Activated naive CD4-positive, alpha-beta T cell treated with anti-CD3 and anti-CD28 coated beads, Interleukin-2, amount 10 ng/mL, durations not matched to agents 7 days and 5 days (primary cell): ENCODE measurements at regions of chr1 and their contacts with region 1.

Region 1: DNA sequence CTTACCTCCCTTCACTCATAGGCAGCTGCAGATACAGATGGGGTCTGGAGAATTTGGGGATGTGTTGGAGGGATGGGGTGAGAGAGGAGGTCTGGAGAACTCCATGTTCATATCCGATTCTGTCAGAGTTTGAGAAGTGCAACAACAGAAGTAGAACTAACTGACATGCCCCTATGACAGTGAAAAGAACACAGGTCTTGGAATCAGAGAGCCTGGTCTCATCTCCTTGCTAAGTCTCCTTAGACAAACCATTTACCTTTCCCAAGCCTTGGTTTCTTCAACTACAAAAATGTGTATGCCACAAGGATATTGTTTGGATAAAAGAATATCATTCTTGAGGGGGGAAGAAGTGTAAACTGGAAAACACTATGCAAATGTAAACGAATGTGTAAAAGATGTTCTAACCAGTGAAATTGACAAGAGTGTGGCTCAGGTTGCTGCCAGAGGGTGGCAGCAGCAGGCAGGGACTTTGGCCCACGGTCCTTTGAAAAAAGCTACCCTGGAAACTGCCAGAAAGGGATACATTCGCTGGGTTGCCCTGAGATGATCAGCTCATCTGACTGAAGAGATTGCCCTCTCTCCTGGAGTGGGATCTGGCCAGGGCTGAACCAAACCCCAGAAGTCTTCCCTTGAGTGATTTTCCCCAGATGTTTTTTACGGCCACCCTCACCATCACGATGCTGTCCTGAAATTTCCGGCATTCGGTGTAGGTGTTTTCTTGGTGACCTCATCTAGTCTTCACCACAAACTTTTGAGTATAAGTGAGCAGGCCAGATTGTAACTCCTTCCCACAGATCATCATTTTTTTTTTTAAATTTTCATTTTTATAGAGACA is 17.0 kb upstream of the CD2 start:
- DNase-seq: peak; percentile 83
- H3K4me3 Mint-ChIP-seq: peak overlapping the region; percentile 25
- H3K27ac Mint-ChIP-seq: peak overlapping the region; percentile 96
- H3K4me1 Mint-ChIP-seq: peaks cover 48% of the 10 kb centered on the region
- H3K27me3 Mint-ChIP-seq: no peaks in the 10 kb centered on the region

Region 2: DNA sequence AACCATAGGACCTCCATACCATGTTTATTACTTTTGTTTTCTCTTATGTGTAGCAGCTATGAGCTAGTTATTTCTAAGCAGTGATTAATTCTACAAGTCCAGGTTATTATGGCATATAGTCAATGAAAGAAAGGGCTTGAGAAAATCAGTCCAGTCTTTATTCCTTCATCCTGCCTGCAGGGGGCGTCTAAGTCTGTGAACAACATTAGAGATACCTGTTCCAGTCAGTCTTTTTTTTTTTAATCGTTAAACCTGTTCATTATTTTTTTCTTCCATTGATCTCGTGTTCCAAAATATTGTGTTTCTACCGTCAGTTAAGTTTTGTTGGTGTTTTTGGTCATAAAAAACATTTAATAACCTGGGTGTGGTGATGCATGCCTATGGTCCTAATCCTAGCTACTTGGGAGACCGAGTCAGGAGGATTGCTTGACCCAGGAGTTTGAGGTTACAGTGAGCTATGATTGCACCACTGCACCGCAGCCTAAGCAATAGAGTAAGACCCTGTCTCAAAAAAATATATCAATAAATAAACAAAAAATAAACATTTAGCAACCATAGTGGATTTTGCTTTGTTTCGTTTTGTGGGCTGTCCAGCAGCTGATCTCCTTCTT is 12.4 kb before region 1 on chr1:
- CTCF ChIA-PET with region 1: interaction called, 39 read pairs
- DNase-seq: peak; percentile 86
- H3K4me3 Mint-ChIP-seq: no peak overlapping the region
- H3K27ac Mint-ChIP-seq: no peak overlapping the region
- H3K4me1 Mint-ChIP-seq: peaks cover 19% of the 10 kb centered on the region
- H3K27me3 Mint-ChIP-seq: peaks cover 4% of the 10 kb centered on the region

Region 3: DNA sequence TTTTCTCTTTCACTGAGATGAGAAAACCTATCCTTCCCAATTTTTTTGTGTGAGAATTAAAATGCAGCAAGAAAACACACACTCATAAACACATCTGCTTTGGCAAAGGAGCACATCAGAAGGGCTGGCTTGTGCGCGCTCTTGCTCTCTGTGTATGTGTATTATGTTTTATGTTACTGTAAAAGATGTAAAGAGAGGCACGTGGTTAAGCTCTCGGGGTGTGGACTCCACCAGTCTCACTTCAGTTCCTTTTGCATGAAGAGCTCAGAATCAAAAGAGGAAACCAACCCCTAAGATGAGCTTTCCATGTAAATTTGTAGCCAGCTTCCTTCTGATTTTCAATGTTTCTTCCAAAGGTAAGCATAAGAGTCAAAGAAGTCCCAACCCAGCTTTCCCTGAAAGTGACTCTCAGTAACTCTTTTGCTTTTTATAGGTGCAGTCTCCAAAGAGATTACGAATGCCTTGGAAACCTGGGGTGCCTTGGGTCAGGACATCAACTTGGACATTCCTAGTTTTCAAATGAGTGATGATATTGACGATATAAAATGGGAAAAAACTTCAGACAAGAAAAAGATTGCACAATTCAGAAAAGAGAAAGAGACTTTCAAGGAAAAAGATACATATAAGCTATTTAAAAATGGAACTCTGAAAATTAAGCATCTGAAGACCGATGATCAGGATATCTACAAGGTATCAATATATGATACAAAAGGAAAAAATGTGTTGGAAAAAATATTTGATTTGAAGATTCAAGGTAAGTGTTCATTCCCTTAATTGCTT is 17.2 kb after region 1 on chr1 and contains the start of gene CD2:
- CTCF ChIA-PET with region 1: interaction called, 62 read pairs
- DNase-seq: peak; percentile 74
- H3K4me3 Mint-ChIP-seq: peak within 1 kb of the TSS; percentile 99
- H3K27ac Mint-ChIP-seq: peak within 1 kb of the TSS; percentile 99
- H3K4me1 Mint-ChIP-seq: peaks cover 43% of the 10 kb centered on the region
- H3K27me3 Mint-ChIP-seq: no peaks in the 10 kb centered on the region

Region 4: GRCh38 chr1:116769561-116769977 is 32.3 kb after region 1 on chr1:
- CTCF ChIA-PET with region 1: interaction called, 67 read pairs
- DNase-seq: peak; percentile 85
- H3K4me3 Mint-ChIP-seq: peak overlapping the region; percentile 59
- H3K27ac Mint-ChIP-seq: peak overlapping the region; percentile 99
- H3K4me1 Mint-ChIP-seq: peaks cover 88% of the 10 kb centered on the region
- H3K27me3 Mint-ChIP-seq: no peaks in the 10 kb centered on the region

Region 5: DNA sequence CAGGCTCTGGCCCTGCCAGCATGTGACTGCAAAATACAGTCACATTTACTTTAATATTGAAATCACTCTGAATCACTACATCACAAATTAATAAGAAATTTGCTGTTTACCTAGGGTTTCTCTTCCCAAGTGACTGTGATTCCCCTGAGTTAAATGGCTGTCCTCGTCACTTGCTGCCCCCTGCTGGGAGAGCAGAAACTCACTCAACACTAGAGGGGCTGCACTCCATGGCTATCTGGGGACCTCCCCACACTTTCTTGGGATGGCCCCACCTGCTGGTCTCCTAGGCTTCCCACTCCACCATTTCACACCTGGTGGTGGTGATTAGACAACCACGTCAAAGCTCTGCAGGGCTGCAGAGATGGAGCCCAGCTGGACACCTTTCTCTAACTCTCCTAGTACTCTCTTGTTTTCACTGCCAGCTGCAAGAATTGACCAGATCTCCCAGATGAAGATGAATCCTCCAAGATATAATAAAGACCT is 80.4 kb after region 1 on chr1:
- CTCF ChIA-PET with region 1: interaction called, 80 read pairs
- DNase-seq: peak; percentile 84
- H3K4me3 Mint-ChIP-seq: peak overlapping the region; percentile 25
- H3K27ac Mint-ChIP-seq: peak overlapping the region; percentile 85
- H3K4me1 Mint-ChIP-seq: peaks cover 50% of the 10 kb centered on the region
- H3K27me3 Mint-ChIP-seq: no peaks in the 10 kb centered on the region

Region 6: GRCh38 chr1:116881879-116882520 is 144.8 kb after region 1 on chr1:
- CTCF ChIA-PET with region 1: interaction called, 37 read pairs
- DNase-seq: peak; percentile 50
- H3K4me3 Mint-ChIP-seq: no peak overlapping the region
- H3K27ac Mint-ChIP-seq: no peak overlapping the region
- H3K4me1 Mint-ChIP-seq: peaks cover 4% of the 10 kb centered on the region
- H3K27me3 Mint-ChIP-seq: no peaks in the 10 kb centered on the region

Region 7: GRCh38 chr1:117059678-117060440 is 322.6 kb after region 1 on chr1 and contains the start of gene TTF2:
- CTCF ChIA-PET with region 1: interaction called, 36 read pairs
- DNase-seq: peak; percentile 97
- H3K4me3 Mint-ChIP-seq: no peak within 1 kb of the TSS
- H3K27ac Mint-ChIP-seq: no peak within 1 kb of the TSS
- H3K4me1 Mint-ChIP-seq: peaks cover 62% of the 10 kb centered on the region
- H3K27me3 Mint-ChIP-seq: no peaks in the 10 kb centered on the region